ENCODE measurements at regions of chrX and their contacts with region 1.

Region 1: GRCh38 chrX:71998836-71999509 is 88.3 kb downstream of the NHSL2 start:
- DNase-seq: peak; percentile 38
- H3K4me3 Mint-ChIP-seq: no peak overlapping the region
- H3K27ac Mint-ChIP-seq: no peak overlapping the region
- H3K4me1 Mint-ChIP-seq: no peaks in the 10 kb centered on the region
- H3K27me3 Mint-ChIP-seq: peaks cover 45% of the 10 kb centered on the region

Region 2: GRCh38 chrX:72126539-72127140 is 127.7 kb after region 1 on chrX:
- CTCF ChIA-PET with region 1: interaction called, 27 read pairs
- DNase-seq: peak; percentile 86
- H3K4me3 Mint-ChIP-seq: no peak overlapping the region
- H3K27ac Mint-ChIP-seq: peak overlapping the region; percentile 64
- H3K4me1 Mint-ChIP-seq: peaks cover 18% of the 10 kb centered on the region
- H3K27me3 Mint-ChIP-seq: peaks cover 85% of the 10 kb centered on the region

Measured in activated naive CD4-positive, alpha-beta T cell treated with anti-CD3 and anti-CD28 coated beads, Interleukin-2, amount 10 ng/mL, durations not matched to agents 7 days and 5 days (primary cell).